WTC11 (cell line): ENCODE measurements at regions of chr12 and their contacts with region 1.

Region 1: DNA sequence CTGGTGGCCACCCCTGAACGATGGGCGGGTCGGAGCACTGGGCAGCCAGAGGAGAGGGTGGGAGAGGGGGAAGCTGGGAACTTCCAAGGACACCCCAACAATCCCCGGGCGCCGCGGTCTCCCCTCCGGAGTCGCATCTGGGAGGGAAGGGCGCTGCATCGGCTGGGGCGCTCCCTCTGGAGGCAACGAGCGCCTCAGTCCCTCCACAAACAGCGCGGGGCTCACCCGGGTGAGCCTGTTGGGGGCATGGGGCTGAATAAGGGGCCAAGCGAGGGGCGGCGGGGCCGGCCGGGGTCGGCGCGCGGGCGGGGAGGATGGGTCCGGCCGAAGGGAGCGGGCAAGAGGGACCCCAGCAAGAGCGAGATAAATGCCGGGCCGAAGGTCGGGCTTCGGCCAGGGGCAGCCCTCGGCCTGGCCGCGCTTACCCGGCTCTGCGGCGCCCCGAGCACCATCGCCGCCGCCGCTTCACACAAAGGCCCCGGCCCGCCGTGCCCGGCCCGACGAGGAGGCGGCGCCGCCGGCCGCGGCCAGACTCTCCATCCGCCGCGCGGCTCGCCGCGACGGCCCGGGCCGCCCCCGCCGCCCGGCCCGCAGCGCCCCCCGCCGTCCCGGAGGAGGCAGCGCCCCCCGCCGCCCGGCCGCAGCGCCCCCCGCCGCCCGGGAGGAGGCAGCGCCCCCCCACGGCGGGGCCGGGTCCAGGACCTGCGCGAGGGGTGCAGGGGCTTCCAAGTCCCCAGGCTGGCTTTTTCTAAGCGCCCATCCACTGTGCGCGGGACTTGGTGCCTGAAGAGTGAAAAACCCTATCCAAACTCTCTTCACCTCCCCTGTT is at the start of gene ZBTB39:
- DNase-seq: peak; percentile 63
- ATAC-seq: peak; percentile 67
- H3K4me3 Mint-ChIP-seq: peak within 1 kb of the TSS; percentile 93
- H3K27ac Mint-ChIP-seq: no peak within 1 kb of the TSS
- H3K4me1 Mint-ChIP-seq: peaks cover 44% of the 10 kb centered on the region
- H3K27me3 Mint-ChIP-seq: no peaks in the 10 kb centered on the region
- CTCF ChIP-seq: no peak
- total RNA-seq, gene ZBTB39: 20.2 to 23.0 TPM (median 22.5 TPM) in 3 replicates

Region 2: GRCh38 chr12:56751712-56752598 is 254.2 kb before region 1 on chr12 and contains the start of gene PRIM1:
- CTCF ChIA-PET with region 1: interaction called, 30 read pairs
- POLR2A ChIA-PET with region 1: interaction called, 5 read pairs
- DNase-seq: peak; percentile 89
- ATAC-seq: peak; percentile 86
- H3K4me3 Mint-ChIP-seq: peak within 1 kb of the TSS; percentile 92
- H3K27ac Mint-ChIP-seq: peak within 1 kb of the TSS; percentile 98
- H3K4me1 Mint-ChIP-seq: peaks cover 17% of the 10 kb centered on the region
- H3K27me3 Mint-ChIP-seq: peaks cover 2% of the 10 kb centered on the region; the same call in 1 of the 2 replicates
- CTCF ChIP-seq: no peak
- total RNA-seq, gene PRIM1: 51.7 to 54.5 TPM (median 54.0 TPM) in 3 replicates

Region 3: DNA sequence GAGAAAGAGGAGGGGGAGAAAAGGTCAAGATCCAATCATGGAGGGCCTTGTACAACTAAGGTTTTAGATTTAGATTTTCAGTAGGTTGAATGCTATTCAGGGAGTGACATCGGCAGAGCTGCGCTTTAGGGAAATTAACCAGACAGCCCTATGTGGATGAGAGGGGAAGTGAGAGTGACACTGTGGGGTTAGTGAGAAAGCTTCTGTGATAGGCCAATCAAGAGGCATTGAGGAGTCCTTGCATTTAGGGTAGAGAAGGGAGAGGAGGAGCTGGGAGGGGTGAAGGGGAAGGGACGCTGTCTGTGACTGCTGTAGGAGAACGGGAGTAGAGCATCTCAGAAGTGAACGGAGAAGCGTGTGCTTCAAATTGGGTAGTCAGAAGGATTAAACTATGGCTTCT is 239.7 kb before region 1 on chr12:
- CTCF ChIA-PET with region 1: interaction called, 34 read pairs
- POLR2A ChIA-PET with region 1: interaction called, 3 read pairs
- DNase-seq: no peak
- ATAC-seq: peak; percentile 34
- H3K4me3 Mint-ChIP-seq: no peak overlapping the region
- H3K27ac Mint-ChIP-seq: peak overlapping the region; percentile 9
- H3K4me1 Mint-ChIP-seq: peaks cover 28% of the 10 kb centered on the region
- H3K27me3 Mint-ChIP-seq: no peaks in the 10 kb centered on the region
- CTCF ChIP-seq: no peak

Region 4: GRCh38 chr12:56931474-56931978 is 74.7 kb before region 1 on chr12:
- CTCF ChIA-PET with region 1: interaction called, 10 read pairs
- POLR2A ChIA-PET with region 1: no interaction called
- DNase-seq: no peak
- ATAC-seq: peak; percentile 32
- H3K4me3 Mint-ChIP-seq: no peak overlapping the region
- H3K27ac Mint-ChIP-seq: no peak overlapping the region
- H3K4me1 Mint-ChIP-seq: peaks cover 38% of the 10 kb centered on the region
- H3K27me3 Mint-ChIP-seq: peaks cover 7% of the 10 kb centered on the region; the same call in 1 of the 2 replicates
- CTCF ChIP-seq: no peak

Region 5: DNA sequence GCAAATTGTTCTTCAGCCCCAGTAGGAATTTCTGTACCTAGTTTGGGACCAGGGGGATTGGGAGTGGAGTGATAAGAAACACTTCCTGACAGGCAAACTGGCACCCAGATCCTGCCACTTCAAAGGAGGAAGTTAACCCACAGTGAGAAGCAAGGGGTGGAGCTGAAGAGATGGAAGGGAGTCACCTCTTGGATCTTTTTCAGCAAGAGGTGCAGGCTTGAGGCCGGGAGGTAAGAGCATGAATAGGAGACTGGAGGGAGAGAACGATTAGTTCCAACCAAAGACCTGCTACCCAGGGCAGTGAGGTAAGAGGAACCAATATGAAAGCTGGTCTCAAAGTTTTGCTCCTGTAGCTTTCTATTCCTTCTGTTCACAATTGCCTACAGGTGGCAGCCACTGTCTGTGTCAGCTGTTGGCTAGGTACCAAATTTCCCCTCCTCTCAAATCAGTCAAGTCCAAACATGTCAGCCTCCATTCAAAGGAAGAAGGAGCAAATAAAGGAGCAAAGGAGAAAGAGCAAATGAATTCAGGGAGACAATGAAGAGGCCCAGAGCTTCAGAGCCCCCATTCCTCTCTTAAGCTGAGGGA is 25.0 kb after region 1 on chr12:
- CTCF ChIA-PET with region 1: interaction called, 12 read pairs
- POLR2A ChIA-PET with region 1: no interaction called
- DNase-seq: no peak
- ATAC-seq: peak; percentile 50
- H3K4me3 Mint-ChIP-seq: no peak overlapping the region
- H3K27ac Mint-ChIP-seq: no peak overlapping the region
- H3K4me1 Mint-ChIP-seq: peaks cover 19% of the 10 kb centered on the region
- H3K27me3 Mint-ChIP-seq: peaks cover under 1% of the 10 kb centered on the region; the same call in 1 of the 2 replicates
- CTCF ChIP-seq: no peak

Region 6: GRCh38 chr12:57063991-57064685 is 57.9 kb after region 1 on chr12:
- CTCF ChIA-PET with region 1: interaction called, 13 read pairs
- POLR2A ChIA-PET with region 1: no interaction called
- DNase-seq: no peak
- ATAC-seq: no peak
- H3K4me3 Mint-ChIP-seq: no peak overlapping the region
- H3K27ac Mint-ChIP-seq: no peak overlapping the region
- H3K4me1 Mint-ChIP-seq: no peaks in the 10 kb centered on the region
- H3K27me3 Mint-ChIP-seq: no peaks in the 10 kb centered on the region
- CTCF ChIP-seq: no peak

Region 7: GRCh38 chr12:57088459-57089248 is 82.5 kb after region 1 on chr12 and contains the start of gene NAB2:
- CTCF ChIA-PET with region 1: interaction called, 12 read pairs
- POLR2A ChIA-PET with region 1: no interaction called
- DNase-seq: peak; percentile 91
- ATAC-seq: peak; percentile 46
- H3K4me3 Mint-ChIP-seq: peak within 1 kb of the TSS; percentile 88
- H3K27ac Mint-ChIP-seq: peak within 1 kb of the TSS; percentile 100
- H3K4me1 Mint-ChIP-seq: peaks cover 40% of the 10 kb centered on the region
- H3K27me3 Mint-ChIP-seq: no peaks in the 10 kb centered on the region; the same call in 1 of the 2 replicates
- CTCF ChIP-seq: no peak
- total RNA-seq, gene NAB2: 16.5 to 20.5 TPM (median 17.2 TPM) in 3 replicates